MCF 10A (cell line): ENCODE measurements at regions of chr5 and their contacts with region 1.

Region 1: GRCh38 chr5:148383564-148384379 is at the start of gene FBXO38:
- DNase-seq: peak; percentile 99
- H3K4me3 Mint-ChIP-seq: peak within 1 kb of the TSS; percentile 85
- H3K27ac Mint-ChIP-seq: peak within 1 kb of the TSS; percentile 98
- H3K4me1 Mint-ChIP-seq: peaks cover 44% of the 10 kb centered on the region
- H3K27me3 Mint-ChIP-seq: no peaks in the 10 kb centered on the region
- CTCF ChIP-seq: no peak
- total RNA-seq, gene FBXO38: 54.4 and 76.1 TPM in 2 replicates

Region 2: GRCh38 chr5:147743678-147744374 is 639.9 kb before region 1 on chr5:
- CTCF ChIA-PET with region 1: no interaction called
- POLR2A ChIA-PET with region 1: no interaction called
- intact Hi-C with region 1: no loop called
- DNase-seq: no peak
- H3K4me3 Mint-ChIP-seq: no peak overlapping the region
- H3K27ac Mint-ChIP-seq: no peak overlapping the region
- H3K4me1 Mint-ChIP-seq: peaks cover 5% of the 10 kb centered on the region
- H3K27me3 Mint-ChIP-seq: peaks cover 51% of the 10 kb centered on the region
- CTCF ChIP-seq: no peak

Region 3: DNA sequence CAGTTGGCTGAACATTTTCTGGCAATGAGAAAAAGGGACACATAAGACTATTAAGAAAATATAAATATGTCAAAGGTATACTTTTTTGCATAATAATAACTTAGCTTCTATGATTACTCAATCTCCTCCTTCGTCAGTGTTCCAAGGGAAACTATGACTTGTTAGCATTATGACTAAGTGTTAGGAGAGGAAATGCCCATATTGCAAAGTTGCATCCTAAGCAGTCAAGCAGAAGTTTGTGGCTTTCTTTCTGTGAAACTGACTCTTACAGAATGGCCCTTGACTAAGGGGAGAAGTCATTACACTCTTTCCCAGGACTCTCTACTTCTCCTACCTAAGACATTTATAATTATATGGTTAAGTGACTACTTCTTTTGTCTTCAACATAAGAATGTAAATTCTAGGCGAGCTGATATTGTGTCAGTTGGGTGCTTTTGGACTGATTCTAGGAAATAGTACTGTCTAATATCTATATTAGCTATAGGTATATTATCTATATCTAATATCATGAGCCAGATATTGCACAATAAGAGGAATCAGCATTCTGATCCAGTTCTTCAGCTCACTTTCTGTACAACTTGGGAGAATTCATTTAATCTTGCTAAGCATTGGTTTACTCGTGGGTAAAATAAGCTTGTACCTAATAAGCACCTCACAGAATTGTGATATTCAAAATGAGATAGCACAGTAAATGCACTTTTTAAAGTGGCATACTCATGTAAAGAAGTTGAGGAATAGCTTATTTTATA is 197.3 kb before region 1 on chr5:
- CTCF ChIA-PET with region 1: no interaction called
- POLR2A ChIA-PET with region 1: interaction called, 12 read pairs
- intact Hi-C with region 1: no loop called
- DNase-seq: peak; percentile 94
- H3K4me3 Mint-ChIP-seq: no peak overlapping the region
- H3K27ac Mint-ChIP-seq: peak overlapping the region; percentile 75
- H3K4me1 Mint-ChIP-seq: peaks cover 7% of the 10 kb centered on the region
- H3K27me3 Mint-ChIP-seq: no peaks in the 10 kb centered on the region
- CTCF ChIP-seq: no peak

Region 4: DNA sequence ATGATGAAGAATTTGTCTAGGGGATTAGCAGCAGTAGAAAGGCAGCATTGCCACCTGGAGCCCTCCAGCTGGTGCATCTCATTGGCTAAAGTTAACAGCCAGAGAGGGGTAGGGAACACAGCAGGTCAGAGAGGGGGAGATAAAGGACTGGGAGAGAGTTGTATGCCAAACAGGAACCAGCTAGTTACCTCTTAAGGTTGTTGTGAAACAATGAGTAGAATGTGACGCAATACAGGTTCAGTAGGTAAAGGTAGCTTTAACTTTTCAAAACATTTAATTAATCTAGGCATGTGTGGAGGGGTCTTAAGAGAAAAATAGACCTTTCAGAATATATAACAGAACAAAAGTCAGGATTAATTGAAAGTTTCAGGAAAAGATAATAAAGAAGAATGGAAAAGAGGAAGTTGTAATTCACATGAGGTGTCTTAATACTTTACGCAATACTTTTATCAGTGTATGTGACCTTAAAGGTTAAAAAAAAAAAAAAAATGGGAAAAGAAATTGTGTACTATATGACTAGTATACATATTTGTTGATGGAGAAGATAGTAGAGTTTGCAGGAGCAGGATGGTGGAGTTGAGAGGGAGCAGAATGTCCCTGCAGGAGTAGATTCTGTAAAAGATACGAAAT is 14.3 kb after region 1 on chr5:
- CTCF ChIA-PET with region 1: interaction called, 3 read pairs
- POLR2A ChIA-PET with region 1: interaction called, 19 read pairs
- intact Hi-C with region 1: no loop called
- DNase-seq: peak; percentile 77
- H3K4me3 Mint-ChIP-seq: no peak overlapping the region
- H3K27ac Mint-ChIP-seq: peak overlapping the region; percentile 9
- H3K4me1 Mint-ChIP-seq: peaks cover 13% of the 10 kb centered on the region
- H3K27me3 Mint-ChIP-seq: no peaks in the 10 kb centered on the region
- CTCF ChIP-seq: no peak